K562 (cell line): ENCODE measurements at regions of chr2 and their contacts with region 1.

Region 1: GRCh38 chr2:233026192-233026813 is 6.2 kb upstream of the NEU2 start:
- DNase-seq: no peak
- ATAC-seq: no peak
- H3K4me3 ChIP-seq: no peak overlapping the region
- H3K27ac ChIP-seq: no peak overlapping the region
- H3K4me1 ChIP-seq: peaks cover 0 to 10% of the 10 kb centered on the region in 2 experiments; a peak in 3 of 5 replicates
- H3K27me3 ChIP-seq: 0 out of 5 replicates have a peak, but pooled peaks cover 0 to 5% of the 10 kb centered on the region in 2 experiments
- CTCF ChIP-seq: no peak
- EP300 ChIP-seq: no peak
- POLR2A ChIP-seq: no peak
- RAD21 ChIP-seq: no peak

Region 2: DNA sequence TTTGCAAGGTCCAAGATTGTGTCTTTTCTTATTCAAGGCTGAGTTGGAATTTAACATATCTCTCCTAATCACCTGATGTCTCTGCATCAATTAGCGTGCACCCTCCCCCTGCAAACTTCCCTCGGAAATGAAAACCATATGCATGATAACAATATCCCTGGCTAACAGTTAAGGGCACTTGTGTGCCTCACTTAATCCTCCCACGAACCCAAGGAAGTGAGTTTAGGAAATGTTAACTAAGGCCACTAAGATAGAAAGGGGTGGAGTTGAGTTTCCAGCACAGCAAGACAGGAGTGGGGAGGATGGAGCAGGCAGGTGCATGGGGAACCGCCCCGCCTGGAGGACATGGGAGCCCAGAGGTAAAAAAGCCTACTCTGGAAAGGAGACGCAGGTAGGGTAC is 1370.4 kb before region 1 on chr2:
- CTCF ChIA-PET with region 1: no interaction called
- POLR2A ChIA-PET with region 1: no interaction called
- in situ Hi-C with region 1: no loop called
- intact Hi-C with region 1: no loop called
- DNase-seq: no peak
- ATAC-seq: no peak
- H3K4me3 ChIP-seq: no peak overlapping the region
- H3K27ac ChIP-seq: no peak overlapping the region
- H3K4me1 ChIP-seq: peaks cover 2 to 4% of the 10 kb centered on the region in 2 experiments; a peak in 2 of 5 replicates
- H3K27me3 ChIP-seq: peaks cover 0 to 6% of the 10 kb centered on the region in 2 experiments; a peak in 2 of 5 replicates
- CTCF ChIP-seq: no peak
- EP300 ChIP-seq: no peak
- POLR2A ChIP-seq: no peak
- RAD21 ChIP-seq: no peak

Region 3: GRCh38 chr2:232600053-232600773 is 426.1 kb before region 1 on chr2:
- CTCF ChIA-PET with region 1: no interaction called
- POLR2A ChIA-PET with region 1: no interaction called
- in situ Hi-C with region 1: no loop called
- intact Hi-C with region 1: loop called (anchors 10 kb)
- DNase-seq: no peak
- ATAC-seq: no peak
- H3K4me3 ChIP-seq: no peak overlapping the region
- H3K27ac ChIP-seq: no peak overlapping the region
- H3K4me1 ChIP-seq: no peaks in the 10 kb centered on the region
- H3K27me3 ChIP-seq: peaks cover 2 to 31% of the 10 kb centered on the region in 2 experiments; a peak in 3 of 5 replicates
- CTCF ChIP-seq: no peak
- EP300 ChIP-seq: no peak
- POLR2A ChIP-seq: no peak
- RAD21 ChIP-seq: no peak

Region 4: DNA sequence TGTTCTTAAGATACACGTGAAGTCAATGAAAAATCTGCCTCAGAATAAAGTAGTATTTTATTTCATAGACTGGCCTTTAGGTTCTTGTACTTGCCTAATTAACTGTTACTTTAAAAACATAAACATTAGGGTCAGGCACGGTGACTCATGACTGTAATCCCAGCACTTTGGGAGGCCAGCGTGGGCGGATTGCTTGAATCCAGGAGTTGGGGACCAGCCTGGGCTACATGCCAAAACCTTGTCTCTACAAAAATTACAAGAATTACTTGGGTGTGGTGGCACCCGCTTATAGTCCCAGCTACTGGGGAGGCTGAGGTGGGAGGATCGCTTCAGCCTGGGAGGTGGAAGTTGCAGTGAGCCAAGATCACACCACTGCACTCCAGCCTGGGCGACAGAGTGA is 172.2 kb before region 1 on chr2:
- CTCF ChIA-PET with region 1: no interaction called
- POLR2A ChIA-PET with region 1: no interaction called
- in situ Hi-C with region 1: no loop called
- intact Hi-C with region 1: loop called (anchors 10 kb)
- DNase-seq: peak; percentile 16 to 89 (median 16)
- ATAC-seq: peak; percentile 84
- H3K4me3 ChIP-seq: no peak overlapping the region
- H3K27ac ChIP-seq: no peak overlapping the region
- H3K4me1 ChIP-seq: peaks cover 7 to 11% of the 10 kb centered on the region in 2 experiments
- H3K27me3 ChIP-seq: no peaks in the 10 kb centered on the region
- CTCF ChIP-seq: no peak
- EP300 ChIP-seq: no peak
- POLR2A ChIP-seq: no peak
- RAD21 ChIP-seq: no peak